Activated naive CD4-positive, alpha-beta T cell treated with anti-CD3 and anti-CD28 coated beads for 36 hours (primary cell): ENCODE measurements at regions of chr10 and their contacts with region 1.

Region 1: GRCh38 chr10:63629363-63630084 is 108.3 kb downstream of the REEP3 start:
- DNase-seq: peak; percentile 89
- H3K4me3 Mint-ChIP-seq: peak overlapping the region; percentile 82
- H3K27ac Mint-ChIP-seq: peak overlapping the region; percentile 69
- H3K4me1 Mint-ChIP-seq: peaks cover 17% of the 10 kb centered on the region
- H3K27me3 Mint-ChIP-seq: no peaks in the 10 kb centered on the region

Region 2: GRCh38 chr10:63133056-63133820 is 496.3 kb before region 1 on chr10 and contains the start of gene NRBF2:
- CTCF ChIA-PET with region 1: interaction called, 3 read pairs
- intact Hi-C with region 1: loop called (anchors 1 kb)
- DNase-seq: peak; percentile 98
- H3K4me3 Mint-ChIP-seq: peak within 1 kb of the TSS; percentile 89
- H3K27ac Mint-ChIP-seq: peak within 1 kb of the TSS; percentile 92
- H3K4me1 Mint-ChIP-seq: peaks cover 38% of the 10 kb centered on the region
- H3K27me3 Mint-ChIP-seq: no peaks in the 10 kb centered on the region
- total RNA-seq, gene NRBF2: 15.4 to 15.6 TPM

Region 3: GRCh38 chr10:63173468-63174232 is 455.9 kb before region 1 on chr10:
- CTCF ChIA-PET with region 1: interaction called, 77 read pairs
- intact Hi-C with region 1: loop called (anchors 1 kb)
- DNase-seq: peak; percentile 18
- H3K4me3 Mint-ChIP-seq: no peak overlapping the region
- H3K27ac Mint-ChIP-seq: peak overlapping the region; percentile 71
- H3K4me1 Mint-ChIP-seq: peaks cover 62% of the 10 kb centered on the region
- H3K27me3 Mint-ChIP-seq: no peaks in the 10 kb centered on the region

Region 4: GRCh38 chr10:63346015-63346441 is 283.5 kb before region 1 on chr10:
- CTCF ChIA-PET with region 1: no interaction called
- intact Hi-C with region 1: loop called (anchors 5 kb)
- DNase-seq: no peak
- H3K4me3 Mint-ChIP-seq: no peak overlapping the region
- H3K27ac Mint-ChIP-seq: no peak overlapping the region
- H3K4me1 Mint-ChIP-seq: peaks cover 9% of the 10 kb centered on the region
- H3K27me3 Mint-ChIP-seq: no peaks in the 10 kb centered on the region

Region 5: DNA sequence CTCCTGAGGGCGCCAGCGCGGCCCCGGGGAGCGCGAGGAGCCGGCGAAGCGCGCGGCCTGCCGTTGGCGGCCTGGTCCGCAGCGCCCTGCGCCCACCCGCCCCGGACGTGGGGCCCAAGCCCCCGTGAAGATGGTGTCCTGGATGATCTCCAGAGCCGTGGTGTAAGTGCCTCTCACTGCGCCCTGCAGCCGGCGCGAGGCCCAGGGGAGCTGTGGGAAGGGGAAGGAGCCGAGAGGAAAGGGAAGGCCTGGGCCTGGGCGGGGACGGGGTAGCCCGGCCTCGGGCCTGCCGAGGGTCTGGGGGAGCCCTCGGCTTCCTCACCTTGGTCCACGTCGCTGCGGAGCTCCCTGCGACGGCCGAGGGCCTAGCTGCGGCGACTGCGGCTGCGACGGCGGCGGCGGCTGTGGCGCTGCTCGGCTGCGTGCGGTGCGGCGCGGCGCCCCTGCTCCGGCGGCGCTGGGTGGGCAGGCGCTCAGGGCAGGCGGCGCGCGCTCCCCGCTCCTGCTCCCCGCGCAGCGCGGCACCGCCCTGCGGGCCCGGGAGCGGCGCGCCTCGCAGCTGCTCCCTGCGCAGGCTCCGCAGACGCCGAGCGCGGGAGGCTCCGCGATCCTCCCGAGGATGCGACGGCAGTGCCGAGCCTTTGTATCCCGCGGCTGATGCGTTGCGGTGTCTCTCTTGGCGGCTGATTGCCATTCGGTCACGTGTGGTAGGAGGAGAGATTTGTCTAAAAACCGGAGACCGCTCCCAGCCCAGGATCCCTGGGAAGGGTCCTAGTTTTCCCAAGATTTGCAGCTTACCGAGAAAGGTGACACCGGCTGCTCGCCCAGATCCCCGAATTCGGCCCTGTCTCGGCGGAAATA is 107.9 kb before region 1 on chr10:
- CTCF ChIA-PET with region 1: interaction called, 10 read pairs
- intact Hi-C with region 1: loop called (anchors 1 kb)
- DNase-seq: peak; percentile 59
- H3K4me3 Mint-ChIP-seq: peak overlapping the region; percentile 84
- H3K27ac Mint-ChIP-seq: peak overlapping the region; percentile 86
- H3K4me1 Mint-ChIP-seq: peaks cover 66% of the 10 kb centered on the region
- H3K27me3 Mint-ChIP-seq: no peaks in the 10 kb centered on the region

Region 6: GRCh38 chr10:63562857-63563256 is 66.7 kb before region 1 on chr10:
- CTCF ChIA-PET with region 1: no interaction called
- intact Hi-C with region 1: no loop called
- DNase-seq: no peak
- H3K4me3 Mint-ChIP-seq: no peak overlapping the region
- H3K27ac Mint-ChIP-seq: no peak overlapping the region
- H3K4me1 Mint-ChIP-seq: no peaks in the 10 kb centered on the region
- H3K27me3 Mint-ChIP-seq: no peaks in the 10 kb centered on the region

Region 7: DNA sequence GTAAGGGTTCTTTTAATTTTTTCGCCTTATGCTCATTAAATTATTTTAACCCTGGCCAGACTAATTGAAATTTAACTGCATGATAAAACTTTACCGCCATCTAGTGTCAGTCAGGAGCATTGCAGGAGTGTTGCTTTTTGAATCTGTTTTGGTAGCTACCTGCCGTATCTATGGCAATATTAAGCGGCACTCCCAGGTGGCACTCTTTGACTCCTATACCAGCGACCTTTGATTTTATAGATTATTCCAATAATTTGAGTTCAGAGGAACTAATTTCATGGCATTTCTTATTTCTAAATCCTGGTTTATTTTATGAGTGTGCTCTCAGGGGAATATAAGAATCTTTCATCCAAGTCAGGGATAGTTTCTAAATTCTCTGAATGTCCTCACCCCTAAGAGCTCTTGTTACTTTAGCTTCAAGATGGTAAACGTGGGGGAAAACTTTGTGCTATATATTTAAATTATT is 90.6 kb after region 1 on chr10:
- CTCF ChIA-PET with region 1: interaction called, 64 read pairs
- intact Hi-C with region 1: loop called (anchors 1 kb)
- DNase-seq: peak; percentile 67
- H3K4me3 Mint-ChIP-seq: no peak overlapping the region
- H3K27ac Mint-ChIP-seq: no peak overlapping the region
- H3K4me1 Mint-ChIP-seq: peaks cover 10% of the 10 kb centered on the region
- H3K27me3 Mint-ChIP-seq: peaks cover 4% of the 10 kb centered on the region